Natural killer cell (primary cell): ENCODE measurements at regions of chr4 and their contacts with region 1.

Region 1: DNA sequence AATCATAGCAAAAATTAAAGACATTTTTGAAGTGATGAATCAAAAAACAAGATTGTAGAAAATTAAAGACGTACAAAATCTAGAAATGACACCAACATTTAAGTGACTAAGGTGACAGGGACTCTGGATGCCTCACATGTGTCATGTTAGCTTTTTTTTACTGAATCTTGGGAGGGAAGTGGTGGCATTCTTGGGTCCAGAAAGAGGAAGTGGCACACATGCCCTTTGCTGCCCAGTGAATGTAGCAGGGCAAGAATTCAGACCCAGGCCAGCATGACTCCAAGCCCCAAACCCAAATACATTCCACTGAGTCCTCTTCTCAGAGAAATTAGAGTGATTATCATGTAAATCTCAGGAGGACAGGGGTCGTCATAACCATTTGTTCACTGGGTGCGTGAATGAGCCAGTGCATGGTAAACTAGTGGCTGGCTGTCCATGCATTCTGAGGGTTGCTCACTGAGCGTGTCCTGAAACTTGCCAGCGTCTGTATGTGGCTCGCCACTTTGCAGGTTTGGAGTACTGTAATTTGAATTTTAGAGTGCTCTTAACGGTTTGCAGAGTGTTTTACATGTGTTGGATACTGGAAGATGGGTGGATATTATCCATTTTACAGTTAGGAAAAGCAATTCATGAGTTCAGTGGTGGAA is 55.4 kb upstream of the TBC1D14 start:
- DNase-seq: no peak
- ATAC-seq: no peak
- H3K4me3 ChIP-seq: no peak overlapping the region
- H3K4me3 Mint-ChIP-seq: no peak overlapping the region
- H3K27ac ChIP-seq: no peak overlapping the region
- H3K27ac Mint-ChIP-seq: peak overlapping the region; percentile 14 to 51
- H3K4me1 ChIP-seq: peaks cover 8% of the 10 kb centered on the region
- H3K4me1 Mint-ChIP-seq: peaks cover 42 to 43% of the 10 kb centered on the region in 2 donors
- H3K27me3 ChIP-seq: no peaks in the 10 kb centered on the region
- H3K27me3 Mint-ChIP-seq: no peaks in the 10 kb centered on the region
- CTCF ChIP-seq: no peak

Region 2: DNA sequence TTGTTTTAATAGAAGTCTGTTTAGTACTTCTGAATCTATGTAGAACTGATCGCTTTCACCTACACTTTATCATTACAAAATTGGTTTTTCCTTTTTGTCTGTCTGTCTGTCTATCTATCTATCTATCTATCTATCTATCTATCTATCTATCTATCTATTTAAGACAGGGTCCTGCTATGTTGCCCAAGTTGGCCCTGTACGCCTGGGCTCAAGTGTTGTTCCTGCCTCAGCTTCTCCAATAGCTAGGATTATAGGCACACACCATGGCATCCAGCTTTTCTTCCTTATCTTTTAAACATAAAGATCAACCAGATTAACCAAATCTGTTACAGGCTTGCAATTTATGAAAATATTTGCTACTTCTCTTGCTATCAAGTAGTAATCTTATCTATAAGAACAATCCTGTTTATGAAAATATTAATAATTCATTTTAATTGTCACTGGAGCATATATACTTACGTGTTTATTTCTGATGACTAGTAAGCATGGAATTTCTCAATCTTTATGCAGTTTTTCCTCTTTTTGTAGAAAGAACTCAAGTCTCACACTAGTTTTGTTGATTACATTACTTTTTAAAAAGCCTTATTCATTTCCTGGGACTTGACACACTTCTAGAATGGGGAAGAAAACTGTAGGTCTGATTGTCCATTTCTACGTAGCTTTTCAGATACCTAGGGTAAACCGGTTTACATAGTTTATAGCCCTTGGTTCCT is 47.1 kb before region 1 on chr4:
- intact Hi-C with region 1: loop called (anchors 5 kb)
- DNase-seq: no peak
- ATAC-seq: peak in 1 of 3 donors; percentile 37
- H3K4me3 ChIP-seq: no peak overlapping the region
- H3K4me3 Mint-ChIP-seq: no peak overlapping the region
- H3K27ac ChIP-seq: no peak overlapping the region
- H3K27ac Mint-ChIP-seq: peak overlapping the region in 1 of 2 donors; percentile 37
- H3K4me1 ChIP-seq: no peaks in the 10 kb centered on the region
- H3K4me1 Mint-ChIP-seq: peaks cover 29 to 54% of the 10 kb centered on the region in 2 donors
- H3K27me3 ChIP-seq: no peaks in the 10 kb centered on the region
- H3K27me3 Mint-ChIP-seq: no peaks in the 10 kb centered on the region
- CTCF ChIP-seq: no peak

Region 3: GRCh38 chr4:7323872-7324650 is 469.8 kb after region 1 on chr4:
- intact Hi-C with region 1: no loop called
- DNase-seq: peak in 1 of 2 donors; percentile 60
- ATAC-seq: peak; percentile 57 to 73 (median 68)
- H3K4me3 ChIP-seq: no peak overlapping the region
- H3K4me3 Mint-ChIP-seq: peak overlapping the region; percentile 78
- H3K27ac ChIP-seq: no peak overlapping the region
- H3K27ac Mint-ChIP-seq: peak overlapping the region; percentile 68 to 83
- H3K4me1 ChIP-seq: peaks cover 41% of the 10 kb centered on the region
- H3K4me1 Mint-ChIP-seq: peaks cover 23 to 39% of the 10 kb centered on the region in 2 donors
- H3K27me3 ChIP-seq: no peaks in the 10 kb centered on the region
- H3K27me3 Mint-ChIP-seq: peaks cover 19 to 21% of the 10 kb centered on the region in 2 donors
- CTCF ChIP-seq: no peak